HEK293 (cell line): ENCODE measurements at regions of chr17 and their contacts with region 1.

Region 1: GRCh38 chr17:43183921-43184320 is 12.9 kb downstream of the NBR1 start:
- H3K4me3 ChIP-seq: no peak overlapping the region
- H3K27ac ChIP-seq: no peak overlapping the region
- H3K4me1 ChIP-seq: no peaks in the 10 kb centered on the region
- CTCF ChIP-seq: no peak

Region 2: GRCh38 chr17:42953669-42954068 is 230.3 kb before region 1 on chr17:
- CTCF ChIA-PET with region 1: no interaction called
- POLR2A ChIA-PET with region 1: interaction called, 12 read pairs
- H3K4me3 ChIP-seq: no peak overlapping the region
- H3K27ac ChIP-seq: no peak overlapping the region
- H3K4me1 ChIP-seq: no peaks in the 10 kb centered on the region
- CTCF ChIP-seq: no peak

Region 3: DNA sequence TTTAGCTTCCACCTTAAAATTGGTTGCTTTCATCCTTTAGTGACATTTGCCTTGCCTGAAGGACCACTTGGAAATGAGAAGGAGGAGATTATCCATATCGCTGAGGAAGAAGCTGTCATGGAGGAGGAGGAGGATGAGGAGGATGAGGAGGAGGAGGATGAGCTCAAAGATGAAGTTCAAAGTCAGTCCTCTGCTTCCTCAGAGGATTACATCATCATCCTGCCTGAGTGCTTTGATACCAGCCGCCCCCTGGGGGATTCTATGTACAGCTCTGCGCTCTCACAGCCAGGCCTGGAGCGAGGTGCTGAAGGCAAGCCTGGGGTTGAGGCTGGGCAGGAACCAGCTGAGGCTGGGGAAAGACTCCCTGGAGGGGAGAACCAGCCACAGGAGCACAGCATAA is 16.2 kb after region 1 on chr17:
- CTCF ChIA-PET with region 1: no interaction called
- POLR2A ChIA-PET with region 1: no interaction called
- H3K4me3 ChIP-seq: no peak overlapping the region
- H3K27ac ChIP-seq: no peak overlapping the region
- H3K4me1 ChIP-seq: no peaks in the 10 kb centered on the region
- CTCF ChIP-seq: no peak